Gastrocnemius medialis (tissue), 4 donors: ENCODE measurements at regions of chr6 and their contacts with region 1.

Region 1: GRCh38 chr6:8435160-8435852 is at the start of gene SLC35B3:
- DNase-seq: peak; percentile 89 to 91
- ATAC-seq: peak; percentile 96 to 97
- H3K4me3 ChIP-seq: peak within 1 kb of the TSS; percentile 87 to 94 (median 92)
- H3K27ac ChIP-seq: peak within 1 kb of the TSS; percentile 81 to 92 (median 84)
- H3K4me1 ChIP-seq: peaks cover 20 to 33% of the 10 kb centered on the region in 2 donors
- H3K27me3 ChIP-seq: no peaks in the 10 kb centered on the region
- CTCF ChIP-seq: no peak
- POLR2A ChIP-seq: peak; percentile 65 to 72
- total RNA-seq, gene SLC35B3: 2.2 to 5.6 (median 3.2) TPM

Region 2: DNA sequence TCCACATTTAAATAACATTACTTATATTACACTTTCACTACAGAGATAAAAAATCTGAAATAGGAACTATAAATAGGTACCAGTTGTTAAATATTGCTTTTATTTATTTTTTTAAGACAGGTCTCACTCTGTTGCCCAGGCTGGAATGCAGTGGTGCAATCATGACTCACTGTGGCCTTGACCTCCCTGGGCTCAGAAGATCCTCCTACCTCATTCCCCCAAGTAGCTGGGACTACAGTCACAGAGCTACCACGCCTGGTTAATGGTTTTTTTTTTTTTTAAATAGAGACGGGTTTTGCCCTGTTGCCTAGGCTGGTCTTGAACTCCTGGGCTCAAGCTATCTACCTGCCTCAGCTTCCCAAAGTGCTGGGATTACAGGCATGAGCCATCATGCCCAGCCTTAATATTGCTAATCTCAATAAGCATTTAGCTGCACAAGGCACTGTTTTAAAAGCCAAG is 350.2 kb before region 1 on chr6:
- in situ Hi-C with region 1: loop called in 1 of 4 experiments (anchors 25 kb)
- intact Hi-C with region 1: no loop called
- DNase-seq: peak in 1 of 2 donors; percentile 54
- ATAC-seq: peak; percentile 30 to 73
- H3K4me3 ChIP-seq: no peak overlapping the region
- H3K27ac ChIP-seq: peak overlapping the region in 2 of 4 donors; percentile 31 to 40
- H3K4me1 ChIP-seq: peaks cover 19 to 27% of the 10 kb centered on the region in 2 donors
- H3K27me3 ChIP-seq: no peaks in the 10 kb centered on the region
- CTCF ChIP-seq: no peak
- POLR2A ChIP-seq: no peak

Region 3: DNA sequence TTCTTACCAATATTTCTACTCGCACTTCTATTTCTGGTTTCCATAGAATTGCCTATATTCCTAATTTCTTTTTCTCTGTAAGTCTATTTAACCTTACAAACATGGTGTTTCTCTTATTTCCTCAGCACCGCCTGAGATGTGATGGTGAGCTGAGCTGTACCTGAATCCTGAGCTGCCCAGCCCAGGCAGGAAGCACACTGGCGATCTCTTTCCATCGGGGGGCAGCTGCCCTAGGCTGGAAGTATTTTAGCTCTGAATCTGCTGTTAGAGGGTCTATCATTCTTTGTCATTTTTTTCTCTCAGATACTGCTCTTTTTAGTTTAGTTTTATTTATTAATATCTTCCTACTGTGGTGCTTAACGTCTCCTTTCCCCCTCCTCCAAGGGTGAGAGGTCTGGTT is 173.4 kb after region 1 on chr6:
- in situ Hi-C with region 1: no loop called
- intact Hi-C with region 1: no loop called
- DNase-seq: no peak
- ATAC-seq: no peak
- H3K4me3 ChIP-seq: no peak overlapping the region
- H3K27ac ChIP-seq: no peak overlapping the region
- H3K4me1 ChIP-seq: no peaks in the 10 kb centered on the region
- H3K27me3 ChIP-seq: no peaks in the 10 kb centered on the region
- CTCF ChIP-seq: no peak
- POLR2A ChIP-seq: no peak